ENCODE measurements at regions of chr22 and their contacts with region 1.

Region 1: GRCh38 chr22:42635531-42635930 is 4.9 kb downstream of the ATP5MGL start:
- DNase-seq: peak; percentile 94
- H3K4me3 Mint-ChIP-seq: peak overlapping the region; percentile 54
- H3K27ac Mint-ChIP-seq: peak overlapping the region; percentile 99
- H3K4me1 Mint-ChIP-seq: peaks cover 9% of the 10 kb centered on the region
- H3K27me3 Mint-ChIP-seq: no peaks in the 10 kb centered on the region
- CTCF ChIP-seq: no peak

Region 2: DNA sequence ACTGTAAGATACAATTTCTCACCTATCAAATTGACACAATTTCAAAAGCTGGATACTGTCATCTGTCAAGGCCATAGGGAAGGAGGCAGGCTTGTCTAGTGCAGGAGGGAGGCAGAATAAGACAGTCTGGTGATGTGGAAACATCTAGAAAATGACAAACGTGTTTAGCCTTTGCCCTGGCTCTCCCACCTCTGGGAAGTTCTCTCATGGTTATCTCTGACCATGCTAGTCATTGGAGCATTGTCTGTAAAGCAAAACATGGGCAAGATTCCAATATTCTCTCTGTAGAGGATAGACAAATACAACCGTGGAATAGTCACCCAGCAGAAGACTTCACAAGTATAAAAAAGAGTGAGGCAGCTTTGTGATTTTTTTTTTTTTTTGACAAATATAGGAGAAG is 90.8 kb before region 1 on chr22:
- CTCF ChIA-PET with region 1: no interaction called
- POLR2A ChIA-PET with region 1: no interaction called
- intact Hi-C with region 1: no loop called
- DNase-seq: no peak
- H3K4me3 Mint-ChIP-seq: no peak overlapping the region
- H3K27ac Mint-ChIP-seq: no peak overlapping the region
- H3K4me1 Mint-ChIP-seq: no peaks in the 10 kb centered on the region
- H3K27me3 Mint-ChIP-seq: peaks cover 9% of the 10 kb centered on the region
- CTCF ChIP-seq: no peak

Region 3: GRCh38 chr22:42621505-42622002 is 14.0 kb before region 1 on chr22:
- CTCF ChIA-PET with region 1: interaction called, 18 read pairs
- POLR2A ChIA-PET with region 1: interaction called, 44 read pairs
- intact Hi-C with region 1: no loop called
- DNase-seq: peak; percentile 76
- H3K4me3 Mint-ChIP-seq: peak overlapping the region; percentile 50
- H3K27ac Mint-ChIP-seq: peak overlapping the region; percentile 93
- H3K4me1 Mint-ChIP-seq: peaks cover 22% of the 10 kb centered on the region
- H3K27me3 Mint-ChIP-seq: no peaks in the 10 kb centered on the region
- CTCF ChIP-seq: peak; percentile 87

Region 4: GRCh38 chr22:42649246-42650099 is 13.9 kb after region 1 on chr22 and contains the start of gene CYB5R3:
- CTCF ChIA-PET with region 1: interaction called, 4 read pairs
- POLR2A ChIA-PET with region 1: interaction called, 56 read pairs
- intact Hi-C with region 1: no loop called
- DNase-seq: peak; percentile 79
- H3K4me3 Mint-ChIP-seq: peak within 1 kb of the TSS; percentile 100
- H3K27ac Mint-ChIP-seq: peak within 1 kb of the TSS; percentile 93
- H3K4me1 Mint-ChIP-seq: peaks cover 24% of the 10 kb centered on the region
- H3K27me3 Mint-ChIP-seq: no peaks in the 10 kb centered on the region
- CTCF ChIP-seq: no peak
- total RNA-seq, gene CYB5R3: 104 and 114 TPM in 2 replicates

Region 5: GRCh38 chr22:42933481-42934091 is 298.1 kb after region 1 on chr22:
- CTCF ChIA-PET with region 1: no interaction called
- POLR2A ChIA-PET with region 1: no interaction called
- intact Hi-C with region 1: loop called (anchors 5 kb)
- DNase-seq: peak; percentile 78
- H3K4me3 Mint-ChIP-seq: peak overlapping the region; percentile 61
- H3K27ac Mint-ChIP-seq: peak overlapping the region; percentile 99
- H3K4me1 Mint-ChIP-seq: peaks cover 80% of the 10 kb centered on the region
- H3K27me3 Mint-ChIP-seq: no peaks in the 10 kb centered on the region
- CTCF ChIP-seq: no peak